H1 (cell line): ENCODE measurements at regions of chr2 and their contacts with region 1.

Region 1: DNA sequence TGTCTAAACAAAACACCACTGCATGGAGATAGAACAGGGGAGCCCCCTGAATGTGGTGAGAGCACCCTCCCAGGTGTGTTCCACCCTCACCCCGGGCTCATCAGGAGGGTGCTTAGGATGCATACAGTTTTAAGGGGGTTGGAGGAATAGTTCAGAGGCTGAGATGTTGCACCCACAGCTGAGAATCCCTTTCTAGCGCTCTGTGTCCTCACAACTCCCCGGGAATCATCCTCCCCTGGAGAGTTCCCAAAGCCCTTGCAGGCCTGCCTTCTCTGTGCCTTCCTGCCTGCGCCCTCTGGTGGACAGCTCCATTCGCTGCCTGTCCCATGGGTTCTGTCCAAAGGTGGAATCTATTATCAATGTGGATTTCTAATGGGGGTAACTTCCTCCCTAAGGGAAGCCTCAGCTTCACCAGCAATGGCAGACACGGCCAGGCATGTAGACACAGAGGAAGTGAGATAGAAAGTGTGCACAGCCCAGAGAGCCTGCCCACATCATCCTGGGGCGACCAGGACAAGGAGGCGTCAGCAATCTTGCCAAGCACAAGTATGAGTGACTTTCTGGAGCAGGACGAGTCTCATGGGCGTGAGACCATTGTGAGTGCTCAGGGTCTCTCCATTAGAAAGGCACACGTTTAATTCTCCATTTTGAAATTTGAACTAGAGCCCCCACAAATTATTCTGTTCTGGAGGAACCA is 1.2 kb upstream of the UGT1A5 start:
- DNase-seq: peak; percentile 50 to 91
- H3K4me3 ChIP-seq: no peak overlapping the region
- H3K27ac ChIP-seq: no peak overlapping the region
- H3K4me1 ChIP-seq: no peaks in the 10 kb centered on the region
- H3K27me3 ChIP-seq: peaks cover 0 to 1% (median 0%) of the 10 kb centered on the region in 4 experiments; a peak in 1 of 7 replicates
- CTCF ChIP-seq: peak; percentile 83 to 91 (median 90)
- EP300 ChIP-seq: no peak
- POLR2A ChIP-seq: no peak
- RAD21 ChIP-seq: peak; percentile 85 to 87

Region 2: GRCh38 chr2:233690435-233690834 is 21.0 kb before region 1 on chr2:
- CTCF ChIA-PET with region 1: interaction called, 19 read pairs
- POLR2A ChIA-PET with region 1: no interaction called
- DNase-seq: no peak
- H3K4me3 ChIP-seq: no peak overlapping the region
- H3K27ac ChIP-seq: no peak overlapping the region
- H3K4me1 ChIP-seq: peaks cover 0 to 8% (median 2%) of the 10 kb centered on the region in 4 experiments; a peak in 1 of 7 replicates
- H3K27me3 ChIP-seq: no peaks in the 10 kb centered on the region
- CTCF ChIP-seq: no peak
- EP300 ChIP-seq: no peak
- POLR2A ChIP-seq: no peak
- RAD21 ChIP-seq: no peak

Region 3: GRCh38 chr2:233700028-233700635 is 11.3 kb before region 1 on chr2:
- CTCF ChIA-PET with region 1: interaction called, 12 read pairs
- POLR2A ChIA-PET with region 1: no interaction called
- DNase-seq: no peak
- H3K4me3 ChIP-seq: no peak overlapping the region
- H3K27ac ChIP-seq: no peak overlapping the region
- H3K4me1 ChIP-seq: peaks cover 0 to 4% (median 0%) of the 10 kb centered on the region in 4 experiments; a peak in 1 of 7 replicates
- H3K27me3 ChIP-seq: no peaks in the 10 kb centered on the region
- CTCF ChIP-seq: no peak
- EP300 ChIP-seq: no peak
- POLR2A ChIP-seq: no peak
- RAD21 ChIP-seq: no peak

Region 4: GRCh38 chr2:233832869-233833311 is 121.4 kb after region 1 on chr2:
- CTCF ChIA-PET with region 1: interaction called, 11 read pairs
- POLR2A ChIA-PET with region 1: no interaction called
- DNase-seq: peak; percentile 38 to 84
- H3K4me3 ChIP-seq: no peak overlapping the region
- H3K27ac ChIP-seq: no peak overlapping the region
- H3K4me1 ChIP-seq: no peaks in the 10 kb centered on the region
- H3K27me3 ChIP-seq: no peaks in the 10 kb centered on the region
- CTCF ChIP-seq: peak; percentile 70 to 89 (median 79)
- EP300 ChIP-seq: no peak
- POLR2A ChIP-seq: no peak
- RAD21 ChIP-seq: peak; percentile 87 to 88